WTC11 (cell line): ENCODE measurements at regions of chr7 and their contacts with region 1.

Region 1: DNA sequence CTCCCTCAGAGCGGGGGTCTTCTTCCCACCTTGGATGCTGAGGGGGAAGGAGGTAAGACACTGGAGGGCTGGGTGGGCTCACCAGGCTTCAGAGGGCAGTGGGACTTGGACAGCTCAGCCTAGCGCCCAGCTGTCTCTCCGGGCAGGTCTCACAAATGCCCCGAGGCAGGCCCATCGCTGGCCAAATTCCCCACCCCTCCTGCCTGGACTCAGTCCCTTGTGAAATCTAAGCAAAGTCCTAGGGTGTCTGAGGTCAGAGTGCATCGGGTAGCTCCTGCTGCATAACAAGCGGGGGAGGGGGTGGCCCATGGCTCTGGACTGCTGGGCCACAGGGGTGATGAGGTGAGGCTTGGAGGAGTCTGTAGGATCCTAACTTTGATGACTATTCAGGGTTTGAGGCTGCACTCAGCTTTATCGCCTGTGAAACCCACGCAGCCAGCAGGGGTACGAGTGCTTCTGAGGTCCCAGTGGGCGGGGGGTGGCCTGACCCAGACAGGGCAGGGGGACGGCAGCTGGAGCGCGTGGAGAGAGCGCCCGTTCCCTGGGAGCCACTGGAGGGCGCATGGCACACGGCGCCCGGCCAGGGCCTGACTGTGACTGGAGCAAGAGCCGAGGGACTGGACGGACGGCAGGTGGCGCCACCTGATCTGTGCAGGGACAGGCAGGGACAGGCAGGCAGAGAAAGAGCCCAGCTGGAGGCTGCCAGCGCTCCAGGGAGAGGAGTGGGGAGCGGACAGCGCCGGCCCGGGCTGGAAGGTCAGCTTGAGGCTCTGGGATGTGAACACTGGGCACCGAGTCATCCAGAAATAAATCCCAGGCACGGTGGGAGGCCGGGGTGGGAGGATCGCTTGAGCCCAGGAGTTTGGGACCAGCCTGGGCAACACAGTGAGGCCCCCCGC is 10.0 kb downstream of the CYP2W1 start:
- DNase-seq: peak; percentile 99
- ATAC-seq: peak; percentile 91
- H3K4me3 Mint-ChIP-seq: no peak overlapping the region
- H3K27ac Mint-ChIP-seq: no peak overlapping the region
- H3K4me1 Mint-ChIP-seq: no peaks in the 10 kb centered on the region
- H3K27me3 Mint-ChIP-seq: no peaks in the 10 kb centered on the region
- CTCF ChIP-seq: peak; percentile 96

Region 2: GRCh38 chr7:957418-958220 is 35.3 kb before region 1 on chr7:
- CTCF ChIA-PET with region 1: interaction called, 13 read pairs
- POLR2A ChIA-PET with region 1: no interaction called
- DNase-seq: peak; percentile 42
- ATAC-seq: peak; percentile 32
- H3K4me3 Mint-ChIP-seq: no peak overlapping the region
- H3K27ac Mint-ChIP-seq: no peak overlapping the region
- H3K4me1 Mint-ChIP-seq: no peaks in the 10 kb centered on the region
- H3K27me3 Mint-ChIP-seq: peaks cover 12% of the 10 kb centered on the region
- CTCF ChIP-seq: no peak

Region 3: DNA sequence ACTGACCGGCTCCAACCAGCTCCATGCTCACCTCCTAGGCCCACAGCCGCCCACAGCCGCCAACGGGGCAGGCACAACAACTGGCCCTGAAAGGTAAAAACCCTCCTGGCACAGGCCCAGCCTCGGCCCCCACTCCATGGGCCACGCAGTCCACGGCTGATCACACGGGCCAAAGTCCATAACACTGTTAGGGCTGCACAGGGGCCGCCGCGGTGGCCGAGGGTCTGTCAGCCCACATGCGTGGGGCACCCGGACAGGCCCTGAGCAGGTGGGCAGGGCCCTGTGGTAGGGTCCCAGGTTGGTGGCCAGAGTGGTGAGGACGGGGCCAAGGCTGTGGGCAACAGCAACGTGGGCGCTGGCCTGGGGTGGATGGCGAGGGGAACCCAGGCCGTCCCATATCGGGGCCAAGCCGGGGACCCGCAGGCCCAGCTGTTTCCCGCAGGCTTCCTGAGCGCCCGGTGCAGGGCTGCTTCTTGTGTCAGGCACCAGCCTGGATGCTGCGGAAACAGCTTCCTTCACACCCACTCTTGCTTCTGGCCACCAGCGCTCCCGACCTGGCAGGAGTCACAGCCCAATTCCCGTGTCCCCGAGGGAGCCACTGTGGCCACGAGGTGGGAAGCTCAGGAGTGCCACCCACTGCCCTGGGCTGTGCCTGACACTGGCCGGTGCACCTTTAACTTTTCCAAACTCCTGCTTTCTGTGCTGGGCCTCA is 19.2 kb after region 1 on chr7:
- CTCF ChIA-PET with region 1: interaction called, 18 read pairs
- POLR2A ChIA-PET with region 1: no interaction called
- DNase-seq: no peak
- ATAC-seq: no peak
- H3K4me3 Mint-ChIP-seq: no peak overlapping the region
- H3K27ac Mint-ChIP-seq: no peak overlapping the region
- H3K4me1 Mint-ChIP-seq: no peaks in the 10 kb centered on the region
- H3K27me3 Mint-ChIP-seq: no peaks in the 10 kb centered on the region
- CTCF ChIP-seq: no peak

Region 4: DNA sequence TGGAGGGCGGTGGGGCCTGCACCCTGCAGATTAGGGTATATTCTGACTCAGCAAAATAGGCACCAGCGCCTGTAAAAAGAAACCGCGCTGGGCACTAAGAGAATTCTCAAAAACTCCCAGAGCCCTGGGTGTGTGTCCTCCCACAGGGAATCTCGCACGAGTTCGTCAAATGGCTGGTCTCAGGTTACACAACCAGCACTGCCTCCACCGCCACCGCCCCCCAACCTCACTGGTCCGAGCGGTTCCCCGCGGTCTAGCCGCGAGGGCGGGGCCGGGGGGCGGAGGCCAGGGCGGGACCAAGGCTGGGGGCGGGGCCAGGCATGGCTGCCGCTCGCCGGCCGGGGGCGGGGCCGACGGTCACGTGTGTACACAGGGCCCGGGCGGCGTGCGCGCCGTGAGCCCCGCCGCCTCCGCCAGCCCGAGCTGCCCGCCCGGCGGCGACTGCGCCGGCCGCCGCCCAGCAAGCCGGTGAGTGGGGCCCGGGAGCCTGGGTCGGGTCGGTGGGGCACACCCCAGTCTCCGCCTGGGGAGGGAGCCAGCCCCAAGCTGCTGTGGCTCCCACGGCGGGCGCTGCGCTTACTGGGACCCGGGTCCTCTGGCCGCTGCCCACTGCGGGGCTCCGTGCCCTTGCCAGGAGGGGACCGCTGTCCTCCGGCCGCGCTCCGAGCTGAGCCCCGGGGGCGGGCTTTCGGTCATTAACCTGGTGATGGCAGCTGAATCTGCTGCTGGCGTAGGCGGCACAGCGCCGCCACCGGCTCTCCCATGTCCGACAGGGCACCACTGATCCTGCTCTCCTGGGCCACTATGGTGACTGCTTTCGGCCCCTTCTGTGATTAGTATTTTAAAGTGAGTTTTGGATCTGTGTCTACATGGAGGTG is 51.5 kb after region 1 on chr7 and contains the start of gene GPR146:
- CTCF ChIA-PET with region 1: interaction called, 48 read pairs
- POLR2A ChIA-PET with region 1: no interaction called
- DNase-seq: peak; percentile 99
- ATAC-seq: peak; percentile 93
- H3K4me3 Mint-ChIP-seq: peak within 1 kb of the TSS; percentile 71
- H3K27ac Mint-ChIP-seq: peak within 1 kb of the TSS; percentile 97
- H3K4me1 Mint-ChIP-seq: peaks cover 31% of the 10 kb centered on the region
- H3K27me3 Mint-ChIP-seq: no peaks in the 10 kb centered on the region
- CTCF ChIP-seq: 0 out of 2 replicates have a peak, but pooled peaks have one; percentile 18
- total RNA-seq, gene GPR146: 0.87 to 1.1 TPM (median 0.92 TPM) in 3 replicates

Region 5: GRCh38 chr7:1065263-1066260 is 72.6 kb after region 1 on chr7:
- CTCF ChIA-PET with region 1: interaction called, 140 read pairs
- POLR2A ChIA-PET with region 1: interaction called, 7 read pairs
- DNase-seq: peak; percentile 92
- ATAC-seq: peak; percentile 91
- H3K4me3 Mint-ChIP-seq: no peak overlapping the region
- H3K27ac Mint-ChIP-seq: no peak overlapping the region; the same call in 1 of the 2 replicates
- H3K4me1 Mint-ChIP-seq: 0 out of 2 replicates have a peak, but pooled peaks cover 3% of the 10 kb centered on the region
- H3K27me3 Mint-ChIP-seq: no peaks in the 10 kb centered on the region
- CTCF ChIP-seq: peak; percentile 72

Region 6: GRCh38 chr7:1169409-1170368 is 176.7 kb after region 1 on chr7:
- CTCF ChIA-PET with region 1: interaction called, 18 read pairs
- POLR2A ChIA-PET with region 1: no interaction called
- DNase-seq: peak; percentile 95
- ATAC-seq: peak; percentile 99
- H3K4me3 Mint-ChIP-seq: peak overlapping the region; percentile 61
- H3K27ac Mint-ChIP-seq: peak overlapping the region; percentile 42; the same call in 1 of the 2 replicates
- H3K4me1 Mint-ChIP-seq: peaks cover 8% of the 10 kb centered on the region
- H3K27me3 Mint-ChIP-seq: 0 out of 2 replicates have a peak, but pooled peaks cover 3% of the 10 kb centered on the region
- CTCF ChIP-seq: peak; percentile 80